Right ventricle myocardium inferior (tissue), 1 donor: ENCODE measurements at regions of chr3 and their contacts with region 1.

Region 1: GRCh38 chr3:142993958-142994442 is 7.4 kb upstream of the U2SURP start:
- DNase-seq: no peak
- ATAC-seq: peak; percentile 54

Region 2: GRCh38 chr3:142586803-142587406 is 407.1 kb before region 1 on chr3:
- intact Hi-C with region 1: loop called (anchors 2 kb)
- DNase-seq: no peak
- ATAC-seq: peak; percentile 44

Region 3: GRCh38 chr3:142929109-142929508 is 64.9 kb before region 1 on chr3:
- intact Hi-C with region 1: loop called (anchors 5 kb)
- DNase-seq: no peak
- ATAC-seq: no peak